Activated naive CD4-positive, alpha-beta T cell treated with anti-CD3 and anti-CD28 coated beads for 36 hours (primary cell): ENCODE measurements at regions of chr12 and their contacts with region 1.

Region 1: GRCh38 chr12:47207340-47207717 is 127.6 kb upstream of the AMIGO2 start:
- DNase-seq: peak; percentile 81
- H3K4me3 Mint-ChIP-seq: peak overlapping the region; percentile 94
- H3K27ac Mint-ChIP-seq: peak overlapping the region; percentile 100
- H3K4me1 Mint-ChIP-seq: peaks cover 71% of the 10 kb centered on the region
- H3K27me3 Mint-ChIP-seq: no peaks in the 10 kb centered on the region

Region 2: GRCh38 chr12:47071241-47071852 is 136.0 kb before region 1 on chr12:
- CTCF ChIA-PET with region 1: interaction called, 12 read pairs
- intact Hi-C with region 1: no loop called
- DNase-seq: peak; percentile 19
- H3K4me3 Mint-ChIP-seq: no peak overlapping the region
- H3K27ac Mint-ChIP-seq: no peak overlapping the region
- H3K4me1 Mint-ChIP-seq: peaks cover 26% of the 10 kb centered on the region
- H3K27me3 Mint-ChIP-seq: no peaks in the 10 kb centered on the region

Region 3: DNA sequence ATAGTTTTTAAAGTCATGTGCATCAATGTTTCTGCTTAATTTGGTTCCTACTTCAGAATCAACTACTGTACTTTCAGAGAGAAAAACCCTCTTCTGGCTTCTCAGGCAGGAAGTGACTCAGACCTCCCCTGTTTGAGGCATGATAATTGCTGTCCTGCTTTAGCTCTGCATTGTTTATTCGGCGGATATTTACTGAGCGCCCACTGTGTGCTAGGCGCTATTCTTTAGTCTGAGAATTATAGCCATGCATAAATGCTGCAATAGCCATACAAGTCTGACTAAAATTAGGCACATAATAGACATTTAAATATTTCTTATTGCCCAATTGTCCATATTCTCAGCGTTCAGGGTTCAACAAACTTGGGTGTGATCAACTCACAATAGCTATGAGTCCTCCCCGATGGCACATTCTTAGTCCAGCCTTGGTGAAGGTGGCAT is 121.5 kb before region 1 on chr12:
- CTCF ChIA-PET with region 1: interaction called, 15 read pairs
- intact Hi-C with region 1: loop called (anchors 1 kb)
- DNase-seq: peak; percentile 63
- H3K4me3 Mint-ChIP-seq: no peak overlapping the region
- H3K27ac Mint-ChIP-seq: peak overlapping the region; percentile 41
- H3K4me1 Mint-ChIP-seq: peaks cover 54% of the 10 kb centered on the region
- H3K27me3 Mint-ChIP-seq: no peaks in the 10 kb centered on the region

Region 4: GRCh38 chr12:47190271-47190750 is 17.0 kb before region 1 on chr12:
- CTCF ChIA-PET with region 1: interaction called, 26 read pairs
- intact Hi-C with region 1: loop called (anchors 1 kb)
- DNase-seq: peak; percentile 75
- H3K4me3 Mint-ChIP-seq: peak overlapping the region; percentile 48
- H3K27ac Mint-ChIP-seq: peak overlapping the region; percentile 92
- H3K4me1 Mint-ChIP-seq: peaks cover 88% of the 10 kb centered on the region
- H3K27me3 Mint-ChIP-seq: no peaks in the 10 kb centered on the region

Region 5: GRCh38 chr12:47223848-47224213 is 16.5 kb after region 1 on chr12:
- CTCF ChIA-PET with region 1: interaction called, 10 read pairs
- intact Hi-C with region 1: loop called (anchors 2 kb)
- DNase-seq: no peak
- H3K4me3 Mint-ChIP-seq: peak overlapping the region; percentile 69
- H3K27ac Mint-ChIP-seq: peak overlapping the region; percentile 92
- H3K4me1 Mint-ChIP-seq: peaks cover 72% of the 10 kb centered on the region
- H3K27me3 Mint-ChIP-seq: no peaks in the 10 kb centered on the region

Region 6: DNA sequence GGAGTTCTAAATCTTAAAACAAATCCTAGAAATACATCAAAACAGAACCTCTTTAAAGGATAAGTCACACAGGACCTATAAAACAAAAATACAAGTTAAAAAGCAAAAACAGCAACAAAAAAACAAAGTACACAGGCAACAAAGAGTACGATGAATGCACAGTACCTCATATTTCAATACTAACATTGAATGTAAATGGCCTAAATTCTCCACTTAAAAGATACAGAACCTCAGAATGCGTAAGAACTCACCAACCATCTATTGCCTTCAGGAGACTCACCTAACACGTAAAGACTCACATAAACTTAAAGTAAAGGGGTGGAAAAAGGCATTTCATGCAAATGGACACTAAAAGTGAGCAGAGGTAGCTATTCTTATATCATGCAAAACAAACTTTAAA is 44.6 kb after region 1 on chr12:
- CTCF ChIA-PET with region 1: no interaction called
- intact Hi-C with region 1: no loop called
- DNase-seq: no peak
- H3K4me3 Mint-ChIP-seq: no peak overlapping the region
- H3K27ac Mint-ChIP-seq: no peak overlapping the region
- H3K4me1 Mint-ChIP-seq: peaks cover 6% of the 10 kb centered on the region
- H3K27me3 Mint-ChIP-seq: no peaks in the 10 kb centered on the region

Region 7: GRCh38 chr12:47307680-47308399 is 100.5 kb after region 1 on chr12:
- CTCF ChIA-PET with region 1: interaction called, 11 read pairs
- intact Hi-C with region 1: no loop called
- DNase-seq: peak; percentile 74
- H3K4me3 Mint-ChIP-seq: peak overlapping the region; percentile 91
- H3K27ac Mint-ChIP-seq: peak overlapping the region; percentile 98
- H3K4me1 Mint-ChIP-seq: peaks cover 73% of the 10 kb centered on the region
- H3K27me3 Mint-ChIP-seq: no peaks in the 10 kb centered on the region

Region 8: DNA sequence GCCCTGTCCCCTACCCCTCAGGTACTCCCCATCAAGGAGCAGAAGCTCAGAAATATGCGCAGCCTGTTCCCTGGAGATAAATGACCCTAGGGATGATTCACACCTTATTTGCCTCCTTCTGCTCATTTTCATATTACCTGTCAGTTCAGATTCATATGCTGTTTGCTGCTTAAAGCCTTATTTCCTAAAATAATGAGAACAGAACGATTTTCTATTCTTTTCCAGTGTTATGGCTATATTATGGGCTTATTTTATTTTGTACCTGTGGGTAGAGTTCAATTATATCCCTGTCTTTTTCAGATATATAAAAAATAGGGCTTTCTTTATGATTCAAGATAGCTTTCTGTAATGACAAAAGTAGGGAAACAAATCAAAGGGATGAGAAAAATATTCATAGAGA is 273.7 kb after region 1 on chr12:
- CTCF ChIA-PET with region 1: no interaction called
- intact Hi-C with region 1: no loop called
- DNase-seq: no peak
- H3K4me3 Mint-ChIP-seq: no peak overlapping the region
- H3K27ac Mint-ChIP-seq: no peak overlapping the region
- H3K4me1 Mint-ChIP-seq: no peaks in the 10 kb centered on the region
- H3K27me3 Mint-ChIP-seq: no peaks in the 10 kb centered on the region